Esophagus squamous epithelium (tissue), 5 donors: ENCODE measurements at regions of chr4 and their contacts with region 1.

Region 1: DNA sequence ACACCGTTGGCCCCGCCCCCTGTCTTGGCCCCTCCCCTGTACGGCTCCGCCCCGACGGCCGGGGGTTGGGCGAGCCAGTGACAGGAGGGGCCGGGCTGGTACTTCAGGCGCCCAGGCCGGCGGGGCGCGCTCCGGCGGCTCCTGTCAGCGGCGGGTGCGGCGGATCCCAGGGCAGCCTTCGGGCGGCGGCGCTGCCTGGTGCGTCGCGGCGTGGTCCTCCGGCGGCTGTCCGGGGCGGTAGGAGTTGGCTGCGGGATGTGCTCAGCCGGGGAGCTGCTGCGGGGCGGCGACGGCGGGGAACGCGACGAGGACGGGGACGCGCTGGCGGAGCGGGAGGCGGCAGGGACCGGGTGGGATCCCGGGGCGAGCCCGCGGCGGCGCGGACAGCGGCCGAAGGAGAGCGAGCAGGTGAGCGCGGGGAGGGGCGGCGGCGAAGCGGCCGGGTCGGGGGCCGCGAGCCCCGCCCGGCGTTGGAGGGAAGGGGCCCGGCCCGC is at the start of gene FAM241A:
- DNase-seq: peak; percentile 42
- H3K4me3 ChIP-seq: peak within 1 kb of the TSS; percentile 77 to 87 (median 82)
- H3K27ac ChIP-seq: peak within 1 kb of the TSS; percentile 87 to 96 (median 92)
- H3K4me1 ChIP-seq: peaks cover 0 to 36% (median 8%) of the 10 kb centered on the region in 3 donors
- H3K27me3 ChIP-seq: no peaks in the 10 kb centered on the region
- CTCF ChIP-seq: no peak
- POLR2A ChIP-seq: peak in 2 of 4 donors; percentile 81 to 95
- total RNA-seq, gene FAM241A: 1.3 to 4.7 (median 4.0) TPM

Region 2: DNA sequence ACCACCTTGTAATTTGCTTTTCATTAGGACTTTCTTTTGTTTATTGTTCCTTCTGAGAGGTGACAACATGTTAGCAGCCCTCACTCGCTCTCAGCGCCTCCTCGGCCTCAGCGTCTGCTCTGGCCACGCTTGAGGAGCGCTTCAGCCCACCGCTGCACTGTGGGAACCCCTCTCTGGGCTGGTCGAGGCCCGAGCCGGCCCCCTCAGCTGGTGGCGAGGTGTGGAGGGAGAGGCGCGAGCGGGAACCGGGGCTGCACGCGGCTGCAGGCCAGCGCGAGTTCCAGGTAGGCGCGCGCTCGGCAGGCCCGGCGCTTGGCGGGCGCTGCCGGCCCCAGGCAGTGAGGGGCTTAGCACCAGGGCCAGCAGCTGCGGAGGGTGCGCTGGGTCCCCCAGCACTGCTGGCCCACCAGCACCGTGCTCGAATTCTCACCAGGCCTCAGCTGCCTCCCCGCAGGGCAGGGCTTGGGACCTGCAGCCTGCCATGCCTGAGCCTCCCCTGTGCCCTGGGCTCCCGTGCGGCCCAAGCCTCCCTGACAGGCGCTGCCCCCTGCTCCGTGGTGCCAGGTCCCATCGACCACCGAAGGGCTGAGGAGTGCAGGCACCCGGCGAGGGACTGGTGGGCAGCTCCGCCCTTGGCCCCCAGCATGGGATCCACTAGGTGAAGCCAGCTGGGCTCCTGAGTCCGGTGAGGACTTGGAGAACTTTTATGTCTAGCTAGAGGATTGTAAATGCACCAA is 77.0 kb after region 1 on chr4:
- intact Hi-C with region 1: loop called (anchors 10 kb)
- DNase-seq: no peak
- H3K4me3 ChIP-seq: no peak overlapping the region
- H3K27ac ChIP-seq: no peak overlapping the region
- H3K4me1 ChIP-seq: no peaks in the 10 kb centered on the region
- H3K27me3 ChIP-seq: no peaks in the 10 kb centered on the region
- CTCF ChIP-seq: no peak
- POLR2A ChIP-seq: no peak